Heart right ventricle (tissue), 16 donors: ENCODE measurements at regions of chr2 and their contacts with region 1.

Region 1: GRCh38 chr2:39436592-39437510 is at the start of gene MAP4K3:
- DNase-seq: peak; percentile 93 to 96
- ATAC-seq: peak; percentile 92 to 95 (median 94)
- H3K4me3 ChIP-seq: peak within 1 kb of the TSS; percentile 65 to 97 (median 92)
- H3K27ac ChIP-seq: peak within 1 kb of the TSS; percentile 90 to 99 (median 98)
- H3K4me1 ChIP-seq: peaks cover 5 to 71% (median 55%) of the 10 kb centered on the region in 9 donors
- H3K27me3 ChIP-seq: no peaks in the 10 kb centered on the region
- CTCF ChIP-seq: no peak
- total RNA-seq, gene MAP4K3: 27.6 to 49.0 (median 40.2) TPM

Region 2: DNA sequence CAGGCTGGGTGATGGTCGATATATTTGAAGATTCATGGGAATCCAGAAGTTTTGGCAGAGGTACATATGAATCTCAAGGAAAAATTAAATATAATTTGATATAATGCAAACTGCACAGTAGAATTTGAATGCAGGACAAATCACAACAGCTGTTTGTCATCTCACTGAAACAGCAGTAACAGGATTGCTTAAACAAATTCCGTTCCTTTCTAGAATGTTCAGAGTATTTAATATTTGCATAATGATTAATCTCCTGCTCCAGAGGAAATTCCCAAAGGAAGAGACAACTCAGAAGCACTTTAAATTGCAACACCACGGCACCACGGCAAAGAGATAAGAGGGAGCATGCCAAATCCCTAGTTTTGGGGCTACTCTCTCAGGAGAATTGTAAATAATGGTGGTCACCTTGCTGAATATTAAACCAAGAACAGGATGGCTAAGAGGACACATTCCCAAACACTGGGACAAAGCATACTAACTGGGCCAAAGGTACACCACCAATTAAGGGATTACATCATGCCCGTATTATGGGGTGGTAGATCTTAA is 68.0 kb after region 1 on chr2:
- intact Hi-C with region 1: loop called in 5 of 10 experiments (anchors 5 kb)
- DNase-seq: no peak
- ATAC-seq: peak in 7 of 8 donors; percentile 31 to 68 (median 48)
- H3K4me3 ChIP-seq: peak overlapping the region in 3 of 10 donors; percentile 2 to 13 (median 3)
- H3K27ac ChIP-seq: peak overlapping the region in 9 of 10 donors; percentile 29 to 86 (median 72)
- H3K4me1 ChIP-seq: peaks cover 2 to 64% (median 48%) of the 10 kb centered on the region in 9 donors
- H3K27me3 ChIP-seq: no peaks in the 10 kb centered on the region
- CTCF ChIP-seq: no peak